Cardiac septum (tissue), 1 donor: ENCODE measurements at regions of chr7 and their contacts with region 1.

Region 1: GRCh38 chr7:16055263-16055976 is 365.9 kb downstream of the CRPPA start:
- DNase-seq: no peak

Region 2: GRCh38 chr7:15747301-15747700 is 308.1 kb before region 1 on chr7:
- intact Hi-C with region 1: loop called (anchors 10 kb)
- DNase-seq: no peak

Region 3: GRCh38 chr7:16098585-16099179 is 43.3 kb after region 1 on chr7:
- intact Hi-C with region 1: no loop called
- DNase-seq: no peak